ENCODE measurements at regions of chr11 and their contacts with region 1.

Region 1: GRCh38 chr11:77195171-77195751 is 67.2 kb downstream of the MYO7A start:
- DNase-seq: no peak
- ATAC-seq: no peak
- H3K4me3 ChIP-seq: no peak overlapping the region
- H3K27ac ChIP-seq: no peak overlapping the region
- H3K4me1 ChIP-seq: peaks cover 0 to 19% of the 10 kb centered on the region in 2 experiments; a peak in 3 of 4 replicates
- H3K27me3 ChIP-seq: no peaks in the 10 kb centered on the region
- CTCF ChIP-seq: no peak
- POLR2A ChIP-seq: no peak
- RAD21 ChIP-seq: no peak

Region 2: GRCh38 chr11:77547863-77548551 is 352.7 kb after region 1 on chr11:
- CTCF ChIA-PET with region 1: interaction called, 17 read pairs
- POLR2A ChIA-PET with region 1: no interaction called
- RAD21 ChIA-PET with region 1: no interaction called
- intact Hi-C with region 1: loop called (anchors 1 kb)
- DNase-seq: peak; percentile 37
- ATAC-seq: peak; percentile 67
- H3K4me3 ChIP-seq: no peak overlapping the region
- H3K27ac ChIP-seq: no peak overlapping the region
- H3K4me1 ChIP-seq: no peaks in the 10 kb centered on the region
- H3K27me3 ChIP-seq: no peaks in the 10 kb centered on the region
- CTCF ChIP-seq: peak; percentile 49 to 93 (median 64)
- POLR2A ChIP-seq: no peak
- RAD21 ChIP-seq: peak; percentile 91

Region 3: DNA sequence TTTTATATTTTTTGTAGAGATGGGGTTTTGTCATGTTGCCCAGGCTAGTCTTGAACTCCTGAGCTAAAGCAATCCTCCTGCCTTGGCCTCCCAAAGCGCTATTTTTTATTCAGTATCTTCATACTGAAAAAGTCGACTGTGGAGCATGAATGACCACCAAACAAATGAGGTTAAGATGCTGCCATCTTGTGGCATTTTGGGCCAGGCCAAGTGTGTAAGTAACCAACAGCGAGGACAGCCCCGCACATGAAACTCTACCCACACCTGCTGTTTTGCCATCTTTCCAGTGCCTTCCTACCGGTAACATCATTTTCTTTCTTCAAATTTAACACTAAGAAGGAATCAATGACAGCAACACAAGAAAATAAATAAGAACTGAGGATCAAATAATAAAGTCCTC is 362.3 kb after region 1 on chr11:
- CTCF ChIA-PET with region 1: interaction called, 11 read pairs
- POLR2A ChIA-PET with region 1: no interaction called
- RAD21 ChIA-PET with region 1: no interaction called
- intact Hi-C with region 1: no loop called
- DNase-seq: no peak
- ATAC-seq: no peak
- H3K4me3 ChIP-seq: no peak overlapping the region
- H3K27ac ChIP-seq: no peak overlapping the region
- H3K4me1 ChIP-seq: peaks cover 21 to 22% of the 10 kb centered on the region in 2 experiments
- H3K27me3 ChIP-seq: no peaks in the 10 kb centered on the region
- CTCF ChIP-seq: peak; percentile 32 to 61 (median 35); a peak in 5 of 6 replicates
- POLR2A ChIP-seq: no peak
- RAD21 ChIP-seq: peak; percentile 63